ENCODE measurements at regions of chr19 and their contacts with region 1.

Region 1: GRCh38 chr19:30682999-30683536 is 310.9 kb downstream of the ZNF536 start:
- DNase-seq: peak; percentile 58 to 97 (median 82)

Region 2: DNA sequence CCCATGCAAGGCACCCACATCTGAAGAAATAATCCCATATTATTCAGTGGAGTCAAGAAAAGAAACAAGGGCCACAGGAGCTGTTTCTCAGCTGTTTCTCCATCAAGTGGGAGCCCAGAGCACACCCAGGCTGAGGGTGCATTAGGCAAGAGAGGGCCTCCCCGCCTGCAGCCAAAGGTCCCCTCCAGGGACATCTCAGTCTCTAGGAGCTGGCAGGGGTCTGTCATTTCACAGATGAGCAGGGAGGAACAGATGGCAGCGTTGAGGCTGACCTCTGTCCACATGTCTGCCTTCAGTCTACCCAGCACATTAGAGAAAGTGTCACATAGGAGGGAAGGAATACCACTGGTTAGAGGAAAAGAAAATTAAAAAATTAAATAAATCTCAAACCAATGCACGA is 153.2 kb before region 1 on chr19:
- intact Hi-C with region 1: no loop called
- DNase-seq: no peak

Region 3: DNA sequence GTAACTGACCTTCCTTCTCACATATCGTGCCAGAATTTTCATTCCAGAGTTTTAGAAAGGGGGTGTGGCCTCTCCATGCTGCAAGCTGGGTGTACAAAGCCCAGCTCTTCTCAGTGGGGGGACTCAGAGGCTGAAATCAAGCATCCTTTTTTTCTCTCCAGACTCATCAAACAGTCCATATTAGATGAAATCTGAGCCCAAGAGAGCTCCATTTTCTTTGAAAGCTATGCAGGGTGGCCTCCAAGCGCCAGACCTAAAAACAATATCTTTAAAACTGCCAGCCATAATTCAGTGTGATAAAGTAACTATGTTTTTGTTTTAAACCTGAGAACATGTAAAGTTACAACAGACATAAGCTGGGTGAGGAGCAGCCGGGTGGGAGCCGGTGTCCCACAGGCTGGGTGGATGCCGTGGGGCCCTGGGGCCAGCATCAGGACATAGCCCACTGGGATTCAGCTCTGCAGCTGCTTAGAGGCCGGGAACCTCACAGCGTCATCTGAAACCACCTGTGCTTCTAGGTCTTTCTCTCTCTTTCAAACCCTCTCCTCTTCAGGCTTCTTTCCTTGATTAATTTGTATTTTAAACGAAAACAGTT is 61.6 kb before region 1 on chr19:
- intact Hi-C with region 1: no loop called
- DNase-seq: no peak

Region 4: DNA sequence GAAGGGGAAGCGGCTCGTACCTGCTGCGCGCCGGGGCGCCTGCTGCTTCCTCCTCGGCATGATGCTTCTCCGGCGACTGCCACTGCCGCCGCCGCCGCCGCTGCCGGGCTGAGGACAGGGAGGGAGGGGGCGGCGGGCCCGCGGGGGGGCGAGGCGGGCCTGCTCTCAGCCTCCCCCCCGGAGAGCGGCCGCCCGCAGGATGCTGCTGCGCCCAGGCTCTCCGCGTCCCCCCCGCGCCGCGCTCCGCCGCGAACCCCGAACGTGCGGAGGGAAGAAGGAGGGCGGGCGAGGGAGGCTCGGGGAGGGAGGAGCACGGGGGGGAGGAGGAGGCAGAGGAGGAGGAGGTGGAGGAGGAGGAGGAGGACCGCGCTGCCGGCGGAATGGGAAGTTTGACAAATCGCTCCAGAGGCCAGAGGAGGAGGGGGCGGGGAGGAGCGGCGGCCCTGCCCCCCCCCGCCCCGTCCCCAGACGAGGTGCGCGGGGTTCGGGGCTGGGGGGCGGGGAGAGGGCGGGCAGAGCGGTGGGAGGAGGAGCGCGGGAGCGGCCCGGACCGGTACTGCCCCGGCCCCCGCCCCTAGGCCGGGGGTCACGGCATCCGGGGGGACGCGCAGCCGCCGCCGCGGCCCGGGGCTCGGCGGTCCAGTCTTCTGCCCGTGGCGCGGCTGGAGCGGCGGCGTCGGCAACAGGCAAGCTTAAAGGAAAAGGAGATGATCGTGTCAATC is 666.3 kb after region 1 on chr19 and contains the start of gene TSHZ3:
- intact Hi-C with region 1: loop called (anchors 2 kb)
- DNase-seq: peak in 7 of 10 donors; percentile 56 to 95 (median 67)

Region 5: GRCh38 chr19:32041681-32042292 is 1358.7 kb after region 1 on chr19:
- intact Hi-C with region 1: loop called (anchors 5 kb)
- DNase-seq: peak in 9 of 10 donors; percentile 28 to 91 (median 64)

Region 6: DNA sequence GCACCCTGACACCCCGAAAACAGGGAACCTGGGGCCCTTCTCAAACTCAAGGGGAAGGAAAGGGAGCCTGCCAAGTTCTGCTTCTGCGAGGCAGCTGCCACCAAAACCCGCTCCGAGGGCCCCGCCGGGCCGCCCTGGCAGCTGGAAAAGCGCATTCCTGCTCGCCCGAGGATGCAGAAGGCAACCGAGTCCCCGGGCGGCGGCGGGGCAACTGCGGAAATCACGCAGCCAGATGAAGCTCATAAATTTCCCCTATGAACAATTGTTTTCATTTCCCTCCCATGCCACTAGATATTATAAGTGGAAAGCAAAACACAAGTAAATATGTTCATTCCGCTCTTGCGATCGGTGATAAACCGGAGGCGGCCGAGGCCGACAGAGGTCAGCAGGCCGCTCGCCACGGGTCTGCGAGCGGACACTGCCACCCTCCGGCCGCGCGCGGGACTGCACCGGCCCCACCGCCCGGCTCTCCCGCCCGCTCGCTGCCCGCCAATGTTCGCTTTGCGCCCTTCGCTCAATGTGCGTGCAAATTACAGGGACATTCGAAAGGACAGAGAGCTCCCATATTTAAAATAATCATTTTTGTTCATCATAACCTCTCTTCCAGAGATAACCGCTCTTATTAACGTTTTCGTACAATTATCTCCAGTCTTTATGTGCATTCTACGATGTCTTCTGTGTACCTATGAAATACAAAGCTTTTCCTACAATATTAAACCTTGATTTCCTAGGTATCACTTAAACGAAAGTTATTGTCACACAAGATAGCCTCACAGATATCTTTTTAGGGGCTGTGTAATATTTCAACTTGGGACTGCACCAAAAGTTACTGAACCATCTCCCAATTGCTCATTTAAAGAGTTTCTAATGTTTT is 1541.5 kb after region 1 on chr19:
- intact Hi-C with region 1: loop called (anchors 5 kb)
- DNase-seq: peak in 9 of 10 donors; percentile 32 to 92 (median 67)